Natural killer cell (primary cell): ENCODE measurements at regions of chr9 and their contacts with region 1.

Region 1: DNA sequence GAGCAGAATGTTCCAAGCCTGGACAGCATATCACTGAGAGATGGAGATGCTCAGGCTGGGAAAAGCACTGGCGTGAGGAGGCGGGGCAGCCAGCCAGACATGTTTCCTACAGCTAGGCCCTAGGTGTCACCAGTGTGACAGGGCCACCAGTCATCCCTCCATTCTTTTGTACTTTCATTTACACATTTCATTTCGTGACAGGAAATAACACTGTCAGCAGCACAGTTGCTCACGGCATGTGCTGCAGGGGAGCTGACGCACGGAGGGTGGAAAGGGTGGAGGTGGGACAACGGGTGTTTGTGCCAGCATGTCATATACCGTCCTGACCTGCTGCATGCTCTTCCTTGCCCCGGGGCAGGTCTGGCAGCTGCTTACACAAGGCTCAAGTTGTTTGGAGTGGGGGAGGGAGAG is 14.8 kb upstream of the CEMIP2 start:
- DNase-seq: peak; percentile 85 to 96
- ATAC-seq: peak; percentile 86 to 97 (median 89)
- H3K4me3 ChIP-seq: no peak overlapping the region
- H3K4me3 Mint-ChIP-seq: peak overlapping the region; percentile 69
- H3K27ac ChIP-seq: peak overlapping the region; percentile 87
- H3K27ac Mint-ChIP-seq: peak overlapping the region; percentile 94 to 98
- H3K4me1 ChIP-seq: peaks cover 45% of the 10 kb centered on the region
- H3K4me1 Mint-ChIP-seq: peaks cover 59 to 63% of the 10 kb centered on the region in 2 donors
- H3K27me3 ChIP-seq: no peaks in the 10 kb centered on the region
- H3K27me3 Mint-ChIP-seq: no peaks in the 10 kb centered on the region
- CTCF ChIP-seq: no peak

Region 2: GRCh38 chr9:71487061-71487460 is 296.1 kb before region 1 on chr9:
- intact Hi-C with region 1: no loop called
- DNase-seq: no peak
- ATAC-seq: no peak
- H3K4me3 ChIP-seq: no peak overlapping the region
- H3K4me3 Mint-ChIP-seq: no peak overlapping the region
- H3K27ac ChIP-seq: no peak overlapping the region
- H3K27ac Mint-ChIP-seq: no peak overlapping the region
- H3K4me1 ChIP-seq: no peaks in the 10 kb centered on the region
- H3K4me1 Mint-ChIP-seq: no peaks in the 10 kb centered on the region
- H3K27me3 ChIP-seq: no peaks in the 10 kb centered on the region
- H3K27me3 Mint-ChIP-seq: peaks cover 0 to 8% of the 10 kb centered on the region in 2 donors
- CTCF ChIP-seq: no peak

Region 3: DNA sequence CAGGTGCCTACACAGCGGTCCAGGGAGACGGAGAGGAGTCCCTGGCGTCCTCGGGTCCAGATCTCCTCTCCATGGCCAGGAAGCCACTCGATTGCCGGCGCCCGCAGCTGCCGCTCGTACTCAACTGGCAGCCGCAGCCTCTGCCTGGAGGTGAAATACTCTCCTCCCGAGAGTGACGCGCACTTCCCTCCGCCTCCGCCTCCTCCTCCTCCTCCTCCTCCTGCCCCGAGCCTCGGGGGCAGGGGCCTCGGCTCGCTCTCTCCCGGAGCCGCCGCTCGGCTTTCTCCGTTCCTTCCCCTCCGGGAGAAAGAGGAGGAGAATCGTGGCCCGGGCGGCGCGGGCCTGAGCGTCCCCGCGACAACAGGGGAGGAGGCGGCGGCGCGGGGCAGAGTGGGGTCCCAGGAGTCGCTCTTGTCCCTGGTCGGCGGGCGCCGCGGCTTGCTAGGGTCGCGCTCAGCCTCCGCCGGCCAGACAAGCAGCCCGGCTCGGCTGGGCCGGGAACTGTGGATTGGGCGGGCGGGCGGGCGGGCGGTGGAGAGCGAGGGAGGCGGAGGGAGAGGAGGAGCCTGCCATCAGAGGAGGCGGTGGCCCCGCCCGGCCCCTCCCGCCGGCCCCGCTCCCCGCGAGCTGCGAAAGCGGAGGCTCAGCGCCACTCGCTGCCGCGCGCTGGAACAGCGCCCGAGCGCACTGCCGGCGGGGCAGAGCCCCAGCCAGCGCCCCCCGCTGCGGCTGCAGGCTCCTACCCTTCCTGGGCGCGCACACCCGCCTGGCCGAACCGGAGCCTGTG is 14.5 kb before region 1 on chr9 and contains the start of gene CEMIP2:
- intact Hi-C with region 1: loop called (anchors 2 kb)
- DNase-seq: peak; percentile 86 to 93
- ATAC-seq: peak; percentile 82 to 95 (median 86)
- H3K4me3 ChIP-seq: peak within 1 kb of the TSS; percentile 88
- H3K4me3 Mint-ChIP-seq: peak within 1 kb of the TSS; percentile 92
- H3K27ac ChIP-seq: peak within 1 kb of the TSS; percentile 96
- H3K27ac Mint-ChIP-seq: peak within 1 kb of the TSS; percentile 88 to 94
- H3K4me1 ChIP-seq: peaks cover 29% of the 10 kb centered on the region
- H3K4me1 Mint-ChIP-seq: peaks cover 54 to 56% of the 10 kb centered on the region in 2 donors
- H3K27me3 ChIP-seq: no peaks in the 10 kb centered on the region
- H3K27me3 Mint-ChIP-seq: no peaks in the 10 kb centered on the region
- CTCF ChIP-seq: peak; percentile 62
- total RNA-seq, gene CEMIP2: 204 to 326 (median 230) TPM

Region 4: GRCh38 chr9:71796100-71796767 is 13.1 kb after region 1 on chr9:
- intact Hi-C with region 1: loop called (anchors 2 kb)
- DNase-seq: peak in 1 of 2 donors; percentile 55
- ATAC-seq: peak in 1 of 3 donors; percentile 64
- H3K4me3 ChIP-seq: no peak overlapping the region
- H3K4me3 Mint-ChIP-seq: peak overlapping the region; percentile 9
- H3K27ac ChIP-seq: peak overlapping the region; percentile 71
- H3K27ac Mint-ChIP-seq: peak overlapping the region; percentile 86 to 91
- H3K4me1 ChIP-seq: peaks cover 28% of the 10 kb centered on the region
- H3K4me1 Mint-ChIP-seq: peaks cover 32 to 36% of the 10 kb centered on the region in 2 donors
- H3K27me3 ChIP-seq: no peaks in the 10 kb centered on the region
- H3K27me3 Mint-ChIP-seq: no peaks in the 10 kb centered on the region
- CTCF ChIP-seq: no peak

Region 5: GRCh38 chr9:71897577-71897976 is 114.5 kb after region 1 on chr9:
- intact Hi-C with region 1: loop called (anchors 5 kb)
- DNase-seq: peak in 1 of 2 donors; percentile 63
- ATAC-seq: peak; percentile 76 to 84 (median 81)
- H3K4me3 ChIP-seq: peak overlapping the region; percentile 5
- H3K4me3 Mint-ChIP-seq: peak overlapping the region; percentile 87
- H3K27ac ChIP-seq: peak overlapping the region; percentile 80
- H3K27ac Mint-ChIP-seq: peak overlapping the region; percentile 87 to 97
- H3K4me1 ChIP-seq: peaks cover 33% of the 10 kb centered on the region
- H3K4me1 Mint-ChIP-seq: peaks cover 82 to 85% of the 10 kb centered on the region in 2 donors
- H3K27me3 ChIP-seq: no peaks in the 10 kb centered on the region
- H3K27me3 Mint-ChIP-seq: no peaks in the 10 kb centered on the region
- CTCF ChIP-seq: no peak

Region 6: DNA sequence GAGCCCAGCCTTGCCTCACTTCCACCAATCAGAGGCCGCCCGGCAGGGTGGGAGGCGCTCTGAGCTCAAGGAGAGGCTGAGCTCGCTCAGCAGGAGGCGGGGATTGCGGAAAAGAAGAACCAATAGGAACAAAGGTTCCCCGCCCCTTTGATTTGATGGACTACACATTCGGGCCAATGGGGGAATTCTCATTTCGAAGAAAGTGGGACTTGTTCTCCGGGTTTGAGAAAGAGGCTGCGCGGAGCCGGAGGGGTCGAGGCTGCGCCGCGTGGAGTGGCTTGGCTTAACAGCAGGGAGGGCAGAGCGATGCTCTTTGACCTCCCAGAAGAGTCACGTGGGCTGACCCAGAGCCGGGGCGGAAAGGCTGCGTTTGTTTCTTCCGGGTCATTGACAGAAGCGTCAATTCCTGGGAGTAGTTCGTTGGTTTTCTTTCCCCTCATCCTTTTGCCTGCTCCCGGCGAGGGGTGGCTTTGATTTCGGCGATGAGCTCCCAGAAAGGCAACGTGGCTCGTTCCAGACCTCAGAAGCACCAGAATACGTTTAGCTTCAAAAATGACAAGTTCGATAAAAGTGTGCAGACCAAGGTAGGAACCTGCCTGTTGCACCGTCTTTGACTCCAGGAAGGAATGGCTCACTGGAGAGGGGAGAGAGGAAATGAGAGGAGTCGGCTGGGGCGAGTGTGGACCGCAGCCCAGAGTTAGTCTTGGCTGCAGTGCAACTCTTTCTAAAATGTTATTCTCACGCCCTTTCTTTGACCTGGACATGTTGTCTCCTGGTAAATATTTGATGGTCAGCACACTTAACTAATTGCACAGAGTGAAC is 128.3 kb after region 1 on chr9 and contains the start of gene C9orf85:
- intact Hi-C with region 1: loop called (anchors 5 kb)
- DNase-seq: peak; percentile 94 to 98
- ATAC-seq: peak; percentile 90 to 98 (median 91)
- H3K4me3 ChIP-seq: peak within 1 kb of the TSS; percentile 62
- H3K4me3 Mint-ChIP-seq: peak within 1 kb of the TSS; percentile 100
- H3K27ac ChIP-seq: peak within 1 kb of the TSS; percentile 80
- H3K27ac Mint-ChIP-seq: peak within 1 kb of the TSS; percentile 97
- H3K4me1 ChIP-seq: peaks cover 12% of the 10 kb centered on the region
- H3K4me1 Mint-ChIP-seq: peaks cover 61 to 70% of the 10 kb centered on the region in 2 donors
- H3K27me3 ChIP-seq: no peaks in the 10 kb centered on the region
- H3K27me3 Mint-ChIP-seq: no peaks in the 10 kb centered on the region
- CTCF ChIP-seq: no peak
- total RNA-seq, gene C9orf85: 5.6 to 11.1 (median 9.2) TPM